Activated naive CD4-positive, alpha-beta T cell treated with anti-CD3 and anti-CD28 coated beads for 36 hours (primary cell): ENCODE measurements at regions of chrX and their contacts with region 1.

Region 1: DNA sequence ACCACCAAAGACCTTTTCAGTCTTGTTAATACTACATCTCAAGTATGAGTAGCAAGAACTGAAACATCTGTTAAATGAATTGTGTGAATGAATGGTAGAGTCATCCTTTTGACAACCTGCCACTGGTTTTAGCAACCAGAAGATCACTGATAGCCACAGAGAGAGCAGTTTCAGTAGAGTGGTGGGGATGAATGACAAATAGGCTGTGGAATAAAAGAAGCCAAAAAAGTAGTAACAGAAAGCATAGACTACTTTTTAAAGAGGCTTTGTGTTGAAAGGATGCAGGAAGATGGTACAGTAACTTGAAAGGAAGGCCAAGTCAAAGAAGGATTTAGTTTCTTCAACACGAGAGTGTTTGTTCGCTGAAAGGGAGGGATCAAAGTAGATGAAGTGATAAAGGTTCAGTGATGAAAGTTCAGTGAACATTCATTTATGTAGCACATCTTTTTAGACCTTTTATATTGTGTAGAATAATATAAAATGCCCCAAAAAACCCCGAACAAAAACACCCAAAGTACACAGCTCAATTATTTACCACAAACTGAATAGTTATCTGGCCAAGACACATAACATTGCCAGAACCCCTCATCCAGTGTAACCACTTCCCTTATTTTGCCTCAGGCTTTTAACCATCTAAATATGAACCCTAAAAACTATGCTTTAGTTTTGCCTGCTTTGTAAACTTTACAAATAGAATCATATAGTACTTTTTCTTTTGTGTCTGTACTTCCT is 40.1 kb upstream of the EIF1AX start:
- DNase-seq: peak; percentile 7
- H3K4me3 Mint-ChIP-seq: no peak overlapping the region
- H3K27ac Mint-ChIP-seq: peak overlapping the region; percentile 51
- H3K4me1 Mint-ChIP-seq: peaks cover 11% of the 10 kb centered on the region
- H3K27me3 Mint-ChIP-seq: no peaks in the 10 kb centered on the region

Region 2: DNA sequence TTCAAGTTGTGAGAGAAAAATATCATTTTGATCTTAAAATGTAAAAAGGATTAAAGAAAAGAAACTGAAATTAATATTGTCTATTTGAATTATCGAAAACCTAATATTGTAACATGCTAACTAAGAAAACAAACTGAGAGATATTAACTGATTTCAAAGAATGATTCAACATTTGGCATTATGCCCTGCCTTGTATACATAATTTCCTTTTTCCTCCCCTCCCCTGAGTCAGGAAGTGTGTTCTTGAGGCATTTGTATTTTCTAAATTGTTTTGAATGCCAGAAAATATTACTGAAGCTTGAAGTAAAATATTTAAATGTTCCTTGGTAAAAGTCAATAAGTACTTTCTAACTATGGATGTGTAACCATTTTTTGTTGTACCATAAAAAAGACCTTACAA is 35.5 kb after region 1 on chrX:
- CTCF ChIA-PET with region 1: no interaction called
- intact Hi-C with region 1: loop called (anchors 5 kb)
- DNase-seq: no peak
- H3K4me3 Mint-ChIP-seq: no peak overlapping the region
- H3K27ac Mint-ChIP-seq: no peak overlapping the region
- H3K4me1 Mint-ChIP-seq: peaks cover 53% of the 10 kb centered on the region
- H3K27me3 Mint-ChIP-seq: no peaks in the 10 kb centered on the region

Region 3: GRCh38 chrX:20230406-20230805 is 48.6 kb after region 1 on chrX:
- CTCF ChIA-PET with region 1: no interaction called
- intact Hi-C with region 1: no loop called
- DNase-seq: no peak
- H3K4me3 Mint-ChIP-seq: no peak overlapping the region
- H3K27ac Mint-ChIP-seq: peak overlapping the region; percentile 21
- H3K4me1 Mint-ChIP-seq: peaks cover 17% of the 10 kb centered on the region
- H3K27me3 Mint-ChIP-seq: no peaks in the 10 kb centered on the region